ENCODE measurements at regions of chr1 and their contacts with region 1.

Region 1: DNA sequence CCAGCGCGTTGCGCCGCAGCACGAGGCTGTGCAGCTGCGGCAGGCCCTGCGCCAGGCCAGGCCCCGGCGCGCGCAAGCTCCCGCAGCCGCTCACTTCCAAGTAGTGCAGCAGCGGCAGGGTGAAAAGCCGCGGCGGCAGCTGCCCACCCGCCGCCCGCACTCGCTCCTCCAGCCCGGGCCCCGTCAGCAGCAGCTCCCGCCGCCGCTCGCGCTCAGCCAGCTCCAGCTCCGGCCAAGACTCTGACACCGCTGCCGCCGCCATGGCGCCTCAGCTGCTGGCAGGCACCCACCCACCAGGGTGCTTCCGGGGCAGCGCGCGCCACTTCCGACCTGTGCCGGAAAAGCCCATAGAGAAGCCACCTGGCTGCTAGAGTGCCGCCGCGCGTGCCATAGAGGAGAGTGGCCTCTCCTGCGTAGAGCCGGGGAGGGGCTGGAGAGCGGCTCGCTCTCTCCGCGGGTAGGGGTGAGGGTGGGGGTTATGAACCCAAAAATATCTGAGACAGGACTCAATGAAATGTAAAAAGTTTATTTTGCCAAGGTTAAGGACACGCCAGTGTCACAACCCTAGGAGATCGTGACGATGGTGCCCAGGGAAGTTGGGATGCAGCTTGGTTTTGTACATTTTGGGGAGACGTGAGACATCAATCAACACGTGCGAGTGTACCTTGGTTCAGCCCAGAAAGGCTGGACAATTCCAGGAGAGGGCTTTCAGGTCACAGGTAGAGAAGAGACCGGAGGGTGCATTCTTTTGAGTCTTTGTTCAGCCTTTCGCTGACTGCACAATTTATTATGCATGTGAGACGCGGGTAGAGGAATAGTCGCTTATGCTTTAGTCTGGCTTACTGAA is at the start of gene LRRC47:
- DNase-seq: peak; percentile 92
- H3K4me3 Mint-ChIP-seq: peak within 1 kb of the TSS; percentile 94
- H3K27ac Mint-ChIP-seq: peak within 1 kb of the TSS; percentile 78
- H3K4me1 Mint-ChIP-seq: peaks cover 26% of the 10 kb centered on the region
- H3K27me3 Mint-ChIP-seq: no peaks in the 10 kb centered on the region
- total RNA-seq, gene LRRC47: 40.4 and 41.3 TPM in 2 replicates

Region 2: DNA sequence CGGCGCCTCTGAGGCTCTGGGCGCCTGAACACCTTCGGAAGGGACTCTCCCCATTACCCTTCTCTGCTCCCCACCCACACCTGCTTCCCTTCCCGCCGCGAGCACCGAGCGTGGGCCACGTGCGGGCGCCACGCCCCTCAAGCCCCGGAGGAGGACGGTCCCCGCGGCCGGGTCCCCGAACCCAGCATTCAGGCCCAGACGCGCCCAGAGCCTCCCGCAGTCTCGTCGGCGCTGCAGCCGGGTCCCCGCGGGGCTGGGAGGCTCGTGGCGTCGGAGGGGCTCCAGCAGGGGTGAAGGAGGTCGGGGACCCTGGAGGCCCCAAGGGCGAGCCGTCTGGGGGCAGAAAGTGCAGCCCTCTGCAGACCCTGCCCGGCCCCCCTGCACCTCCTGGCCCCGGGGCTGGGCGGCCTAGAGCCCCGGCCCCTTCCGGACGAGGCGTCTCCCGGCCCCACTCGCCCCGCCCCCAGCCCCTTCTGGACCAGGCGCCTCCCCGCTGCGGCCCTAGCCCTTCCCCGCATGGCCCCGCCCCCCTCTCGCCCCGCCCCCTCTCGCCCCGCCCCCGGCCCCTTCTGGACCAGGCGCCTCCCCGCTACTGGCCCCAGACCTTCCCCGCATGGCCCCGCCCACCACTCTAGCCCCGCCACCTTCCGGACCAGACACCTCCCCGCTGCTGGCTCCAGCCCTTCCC is 24.3 kb before region 1 on chr1:
- intact Hi-C with region 1: loop called (anchors 1 kb)
- DNase-seq: peak; percentile 81
- H3K4me3 Mint-ChIP-seq: peak overlapping the region; percentile 64
- H3K27ac Mint-ChIP-seq: no peak overlapping the region
- H3K4me1 Mint-ChIP-seq: peaks cover 5% of the 10 kb centered on the region
- H3K27me3 Mint-ChIP-seq: no peaks in the 10 kb centered on the region